Mammary epithelial cell (primary cell): ENCODE measurements at regions of chr22 and their contacts with region 1.

Region 1: GRCh38 chr22:47043835-47044721 is 281.6 kb downstream of the TBC1D22A start:
- DNase-seq: no peak
- H3K4me3 ChIP-seq: no peak overlapping the region
- H3K27ac ChIP-seq: no peak overlapping the region
- H3K4me1 ChIP-seq: no peaks in the 10 kb centered on the region
- H3K27me3 ChIP-seq: no peaks in the 10 kb centered on the region
- CTCF ChIP-seq: no peak

Region 2: DNA sequence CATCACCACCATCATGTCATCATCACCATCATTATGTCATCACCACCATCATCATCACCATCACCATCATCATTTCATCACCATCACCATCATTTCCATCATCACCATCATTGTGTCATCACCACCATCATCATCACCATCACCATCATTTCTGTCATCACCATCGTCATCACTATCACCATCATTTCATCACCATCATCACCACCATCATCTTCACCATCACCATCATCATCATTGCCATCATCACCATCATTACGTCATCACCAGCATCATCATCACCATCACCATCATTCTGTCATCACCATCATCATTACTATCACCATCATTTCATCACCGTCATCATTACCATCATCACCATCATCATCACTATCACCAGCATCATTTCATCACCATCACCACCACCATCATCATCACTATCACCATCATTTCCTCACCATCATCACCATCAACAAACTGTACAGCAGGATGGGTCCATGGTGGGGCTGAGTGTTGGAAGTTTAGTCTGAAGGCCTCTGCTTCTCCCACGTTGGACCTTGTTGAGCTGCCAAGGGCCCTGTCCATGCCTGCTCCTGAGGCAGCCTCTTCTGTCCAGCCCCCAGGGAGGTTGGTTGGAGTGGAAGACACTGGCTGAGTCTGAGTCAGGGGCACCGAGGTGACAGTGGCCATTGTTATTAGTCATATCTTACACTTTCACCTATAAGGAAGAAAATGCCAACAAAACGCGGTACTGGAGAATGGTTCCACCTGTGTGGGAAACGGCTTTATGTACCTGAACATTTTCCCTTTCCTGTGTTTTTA is 34.6 kb before region 1 on chr22:
- CTCF ChIA-PET with region 1: no interaction called
- dilution Hi-C with region 1: loop called (anchors 5 kb)
- in situ Hi-C with region 1: no loop called
- intact Hi-C with region 1: no loop called
- DNase-seq: no peak
- H3K4me3 ChIP-seq: no peak overlapping the region
- H3K27ac ChIP-seq: no peak overlapping the region
- H3K4me1 ChIP-seq: no peaks in the 10 kb centered on the region
- H3K27me3 ChIP-seq: no peaks in the 10 kb centered on the region
- CTCF ChIP-seq: no peak

Region 3: DNA sequence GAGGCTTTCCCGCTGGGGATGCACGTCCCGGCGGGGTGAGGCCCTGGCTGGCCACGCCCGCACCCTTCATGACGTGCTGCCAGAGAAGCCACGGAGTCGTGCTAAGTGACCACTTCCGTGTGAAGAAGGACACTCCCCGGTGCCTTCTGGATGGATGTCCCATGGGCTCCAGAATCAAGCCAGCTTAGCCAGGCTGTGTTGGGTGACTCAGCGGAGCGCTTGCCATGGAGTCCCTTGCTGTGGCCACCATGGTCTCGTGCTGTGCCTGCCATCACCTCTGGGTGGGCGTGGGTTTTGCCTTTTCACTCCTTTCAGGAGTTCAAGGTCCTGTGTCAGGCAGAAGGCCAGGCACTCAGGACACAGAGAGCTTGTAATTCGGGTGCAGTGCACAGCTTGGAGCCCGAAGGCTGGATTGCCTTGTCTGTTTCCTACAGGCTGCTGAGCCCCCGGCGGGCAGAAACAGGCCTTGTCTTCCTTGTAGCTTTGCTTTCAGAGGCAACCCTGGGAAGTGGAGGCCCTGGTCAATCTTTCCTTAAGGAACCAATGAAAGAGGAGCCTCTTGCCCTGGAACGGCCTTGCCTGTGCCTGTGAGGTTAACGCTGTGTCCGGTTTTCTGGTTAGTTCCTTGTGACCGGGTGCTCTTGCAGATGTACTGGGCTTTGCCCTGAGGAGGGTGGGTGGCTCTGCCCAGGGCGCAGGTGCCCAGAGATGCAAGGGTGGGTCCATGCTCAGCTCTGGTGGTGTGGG is 13.0 kb before region 1 on chr22:
- CTCF ChIA-PET with region 1: no interaction called
- dilution Hi-C with region 1: no loop called
- in situ Hi-C with region 1: no loop called
- intact Hi-C with region 1: no loop called
- DNase-seq: no peak
- H3K4me3 ChIP-seq: no peak overlapping the region
- H3K27ac ChIP-seq: no peak overlapping the region
- H3K4me1 ChIP-seq: no peaks in the 10 kb centered on the region
- H3K27me3 ChIP-seq: no peaks in the 10 kb centered on the region
- CTCF ChIP-seq: no peak

Region 4: DNA sequence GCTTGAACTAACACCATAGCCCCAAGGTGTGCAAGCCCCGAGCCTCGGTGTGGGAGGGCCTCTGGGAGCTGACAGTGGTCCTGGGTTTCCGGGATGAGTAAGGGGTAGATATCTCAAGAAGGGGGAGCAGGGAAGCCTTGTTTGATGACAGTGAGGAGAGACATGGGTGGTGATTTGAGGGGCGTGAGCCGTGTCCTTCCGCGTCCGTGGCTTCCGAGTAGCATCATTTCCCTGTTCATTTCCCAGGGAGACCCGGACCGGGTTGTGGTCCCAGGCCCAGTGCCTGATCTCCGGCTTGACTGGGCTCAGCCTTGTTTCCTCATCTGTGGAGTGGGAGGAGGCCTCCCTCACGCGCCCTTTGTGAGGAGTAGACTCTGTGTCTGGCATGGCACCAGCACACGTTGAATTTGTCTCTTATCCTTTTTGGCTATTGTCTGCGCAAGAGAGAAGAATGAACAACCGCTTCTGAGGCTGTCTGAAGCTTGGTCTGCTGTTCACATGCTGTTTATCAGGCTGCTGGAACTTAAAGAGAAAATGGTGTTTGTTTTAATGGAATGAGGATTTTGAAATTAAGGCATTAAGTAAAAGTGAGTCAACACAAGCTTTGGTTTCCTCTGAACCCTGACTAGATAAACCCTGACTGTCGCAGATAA is 66.8 kb after region 1 on chr22:
- CTCF ChIA-PET with region 1: no interaction called
- dilution Hi-C with region 1: loop called (anchors 5 kb)
- in situ Hi-C with region 1: no loop called
- intact Hi-C with region 1: no loop called
- DNase-seq: no peak
- H3K4me3 ChIP-seq: no peak overlapping the region
- H3K27ac ChIP-seq: no peak overlapping the region
- H3K4me1 ChIP-seq: peaks cover 14% of the 10 kb centered on the region
- H3K27me3 ChIP-seq: no peaks in the 10 kb centered on the region
- CTCF ChIP-seq: no peak